ENCODE measurements at regions of chr7 and their contacts with region 1.

Region 1: DNA sequence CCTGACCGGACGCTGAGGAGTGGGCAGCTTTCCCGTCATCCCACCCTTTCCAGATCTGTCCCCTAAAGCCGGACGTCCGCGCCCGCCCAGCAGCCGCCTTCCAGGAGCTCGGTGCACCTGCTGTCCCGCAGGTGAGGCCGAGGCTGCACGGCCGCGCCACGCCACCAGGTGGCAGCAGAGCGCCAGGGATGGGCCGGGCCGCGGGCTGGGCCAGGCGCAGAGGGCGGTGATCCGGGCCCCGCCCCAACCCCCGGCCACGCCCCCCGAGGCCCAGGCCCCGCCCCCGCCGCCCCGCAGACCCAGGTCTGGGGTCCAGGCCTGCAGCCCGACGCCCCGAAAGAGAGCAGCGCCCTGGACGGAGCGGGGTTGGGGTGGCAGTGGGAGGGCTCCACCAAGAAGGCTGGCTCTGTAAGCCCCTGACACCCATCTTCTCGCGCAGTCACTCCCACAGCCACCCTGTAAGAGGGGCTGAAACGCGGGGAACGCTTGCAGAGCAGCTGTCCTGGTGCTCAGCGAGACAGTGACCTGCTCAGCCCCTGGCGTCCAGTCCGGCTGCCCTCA is 32.2 kb downstream of the FOXL3 start:
- DNase-seq: peak; percentile 67 to 80
- H3K4me3 ChIP-seq: peak overlapping the region in 1 of 3 donors; percentile 24
- H3K27ac ChIP-seq: no peak overlapping the region
- H3K4me1 ChIP-seq: no peaks in the 10 kb centered on the region
- H3K27me3 ChIP-seq: peaks cover 0 to 8% of the 10 kb centered on the region in 2 donors
- CTCF ChIP-seq: peak; percentile 74 to 82 (median 75)
- POLR2A ChIP-seq: no peak

Region 2: DNA sequence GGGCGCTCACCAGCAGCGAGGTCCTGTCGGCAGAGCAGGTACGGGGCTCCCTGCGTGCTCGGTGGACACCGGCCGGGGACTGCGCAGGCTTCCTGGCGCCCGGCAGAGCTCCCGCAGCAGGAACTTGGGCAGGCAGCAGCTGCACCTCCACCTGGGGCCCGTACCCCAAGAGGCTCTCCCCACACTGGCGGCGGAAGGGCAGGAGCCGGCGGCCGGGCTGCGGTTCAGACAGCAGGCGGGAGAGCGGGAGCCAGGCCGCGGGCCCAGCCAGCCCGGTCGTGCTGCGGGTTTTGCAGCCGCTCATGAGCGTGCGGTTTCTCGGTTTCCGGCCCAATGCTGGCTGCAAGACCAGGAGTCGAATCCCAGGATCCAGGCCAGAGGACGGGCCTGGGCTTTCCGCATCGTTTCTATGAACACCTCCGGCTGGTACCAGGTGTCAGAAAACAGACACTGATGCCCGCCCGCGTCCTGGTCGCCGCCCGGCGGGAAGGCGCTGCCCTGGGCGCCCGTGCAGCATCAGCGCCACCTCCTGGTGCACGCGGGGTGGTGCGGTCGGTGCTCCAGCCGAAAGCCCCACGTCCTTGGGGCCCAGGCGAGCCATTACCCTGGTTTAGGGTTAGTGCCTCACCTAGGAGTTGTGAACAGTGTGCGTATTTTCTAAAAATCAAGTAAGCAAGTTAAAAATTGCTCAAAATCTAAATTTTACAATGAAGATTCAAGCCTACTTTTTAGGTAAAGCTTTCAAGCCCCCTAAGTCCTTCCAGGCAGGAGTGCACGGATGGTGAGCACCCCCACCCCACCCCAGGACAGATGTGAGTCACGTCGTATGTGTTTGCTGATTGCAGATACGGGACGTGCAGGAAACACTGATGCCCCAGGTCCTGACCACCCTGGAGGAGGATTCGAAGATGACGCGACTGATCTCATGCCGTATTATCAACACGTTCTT is 452.2 kb after region 1 on chr7:
- intact Hi-C with region 1: loop called (anchors 10 kb)
- DNase-seq: peak in 1 of 2 donors; percentile 50
- H3K4me3 ChIP-seq: peak overlapping the region in 1 of 3 donors; percentile 0
- H3K27ac ChIP-seq: no peak overlapping the region
- H3K4me1 ChIP-seq: no peaks in the 10 kb centered on the region
- H3K27me3 ChIP-seq: no peaks in the 10 kb centered on the region
- CTCF ChIP-seq: peak; percentile 80 to 95 (median 83)
- POLR2A ChIP-seq: no peak